Adrenal gland (tissue), 19 donors: ENCODE measurements at regions of chr2 and their contacts with region 1.

Region 1: GRCh38 chr2:42828487-42829425 is 36.4 kb upstream of the HAAO start:
- DNase-seq: peak; percentile 58 to 88 (median 74)
- H3K4me3 ChIP-seq: no peak overlapping the region
- H3K27ac ChIP-seq: peak overlapping the region in 1 of 5 donors; percentile 51
- H3K4me1 ChIP-seq: peaks cover 0 to 17% of the 10 kb centered on the region in 2 donors
- H3K27me3 ChIP-seq: no peaks in the 10 kb centered on the region
- CTCF ChIP-seq: peak; percentile 71 to 93 (median 82)
- POLR2A ChIP-seq: no peak

Region 2: DNA sequence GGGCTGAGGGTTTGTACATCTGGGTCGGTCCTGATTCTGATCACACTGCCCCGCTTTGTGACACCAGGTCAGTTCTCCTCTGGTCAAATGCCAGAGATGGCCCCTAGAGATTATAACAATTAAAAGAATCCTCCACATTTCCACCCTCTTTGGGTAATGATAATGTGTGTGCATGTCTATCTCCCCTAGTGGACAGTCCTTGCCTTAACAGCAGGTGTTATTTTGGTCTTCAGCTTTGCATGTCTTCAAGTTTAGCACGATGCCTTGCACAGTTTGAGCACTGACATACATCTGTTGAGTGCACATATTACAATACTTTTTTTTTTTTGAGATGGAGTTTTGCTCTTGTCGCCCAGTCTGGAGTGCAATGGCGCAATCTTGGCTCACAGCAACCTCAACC is 442.1 kb before region 1 on chr2:
- intact Hi-C with region 1: no loop called
- DNase-seq: no peak
- H3K4me3 ChIP-seq: no peak overlapping the region
- H3K27ac ChIP-seq: no peak overlapping the region
- H3K4me1 ChIP-seq: no peaks in the 10 kb centered on the region
- H3K27me3 ChIP-seq: no peaks in the 10 kb centered on the region
- CTCF ChIP-seq: peak in 5 of 6 experiments; percentile 16 to 40 (median 22)
- POLR2A ChIP-seq: no peak

Region 3: DNA sequence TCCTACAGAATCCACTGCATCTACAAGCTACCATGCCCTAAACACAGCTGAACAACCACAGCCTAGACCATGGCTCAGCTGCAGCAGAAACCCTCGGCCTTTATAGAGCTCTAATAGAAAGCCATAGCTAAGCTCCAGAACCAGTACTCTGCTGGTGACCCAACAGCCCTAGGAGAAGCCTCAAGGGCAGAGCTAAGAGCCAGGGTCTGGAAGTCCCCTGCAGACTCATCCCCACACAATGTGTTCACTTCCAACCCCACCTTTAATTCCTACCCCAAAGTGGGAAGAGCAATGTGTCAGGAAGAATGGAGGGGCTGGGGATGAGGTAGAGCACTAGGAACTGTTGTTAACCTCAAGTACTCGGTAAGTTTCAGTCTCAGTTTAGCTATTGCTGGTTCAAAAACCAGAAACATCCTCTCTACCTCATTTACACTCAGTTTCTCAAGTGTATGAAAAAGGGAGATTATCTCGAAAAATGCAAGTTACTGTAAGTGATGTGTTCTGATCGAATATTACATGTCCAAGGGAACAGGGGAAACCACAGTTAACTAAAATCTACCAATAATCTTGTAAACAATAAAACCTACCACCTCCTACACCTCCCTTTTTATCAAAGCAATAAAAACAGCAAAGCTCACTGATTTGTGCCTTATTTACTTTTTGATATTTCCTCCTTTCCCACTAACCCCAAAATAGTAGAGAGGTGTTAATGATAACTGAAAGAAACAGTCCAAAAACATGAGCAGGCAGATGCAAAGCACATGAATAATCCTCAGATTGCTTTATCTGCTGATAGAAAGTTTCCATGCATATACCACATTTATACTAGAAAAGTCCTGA is 730.9 kb after region 1 on chr2:
- intact Hi-C with region 1: loop called in 1 of 2 experiments (anchors 10 kb)
- DNase-seq: no peak
- H3K4me3 ChIP-seq: no peak overlapping the region
- H3K27ac ChIP-seq: no peak overlapping the region
- H3K4me1 ChIP-seq: no peaks in the 10 kb centered on the region
- H3K27me3 ChIP-seq: no peaks in the 10 kb centered on the region
- CTCF ChIP-seq: no peak
- POLR2A ChIP-seq: no peak

Region 4: GRCh38 chr2:43609290-43609937 is 780.7 kb after region 1 on chr2:
- intact Hi-C with region 1: loop called in 1 of 2 experiments (anchors 2 kb)
- DNase-seq: peak in 6 of 7 donors; percentile 32 to 65 (median 37)
- H3K4me3 ChIP-seq: no peak overlapping the region
- H3K27ac ChIP-seq: no peak overlapping the region
- H3K4me1 ChIP-seq: no peaks in the 10 kb centered on the region
- H3K27me3 ChIP-seq: no peaks in the 10 kb centered on the region
- CTCF ChIP-seq: peak; percentile 57 to 73 (median 68)
- POLR2A ChIP-seq: no peak